HAP-1 (cell line): ENCODE measurements at regions of chr16 and their contacts with region 1.

Region 1: DNA sequence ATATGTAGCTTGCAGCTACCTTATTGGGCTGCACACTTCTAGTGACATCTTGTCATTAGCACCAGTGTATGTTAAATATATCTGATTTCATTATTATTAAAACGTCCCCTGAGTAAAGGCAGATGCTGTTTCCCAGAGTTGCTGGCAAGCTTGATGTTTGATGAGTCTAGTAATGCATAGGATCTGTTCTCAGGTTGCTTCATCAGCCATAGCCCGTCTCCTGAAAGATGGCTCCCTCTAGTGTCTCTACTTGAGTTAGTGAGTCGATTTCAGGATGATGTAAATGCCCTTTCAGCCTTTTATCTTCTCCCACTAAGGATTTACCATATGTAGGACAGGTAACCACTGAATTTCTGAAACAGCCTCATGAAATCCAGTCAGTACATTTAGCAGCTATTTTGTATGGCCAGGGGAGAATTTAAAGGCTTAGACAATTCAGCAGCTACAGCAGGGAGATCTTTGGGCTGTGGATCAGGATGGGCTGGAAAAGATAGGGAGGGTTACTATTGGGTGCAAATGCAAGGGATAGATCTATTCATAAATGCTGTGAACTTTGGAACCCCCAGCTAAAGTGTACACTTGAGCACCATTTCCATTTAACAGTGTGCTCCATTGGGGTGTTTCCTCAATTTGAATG is 376.3 kb downstream of the CNTNAP4 start:
- DNase-seq: peak; percentile 30 to 49
- H3K4me3 ChIP-seq: no peak overlapping the region
- H3K4me1 ChIP-seq: no peaks in the 10 kb centered on the region
- H3K27me3 ChIP-seq: 0 out of 2 replicates have a peak, but pooled peaks cover 6% of the 10 kb centered on the region

Region 2: DNA sequence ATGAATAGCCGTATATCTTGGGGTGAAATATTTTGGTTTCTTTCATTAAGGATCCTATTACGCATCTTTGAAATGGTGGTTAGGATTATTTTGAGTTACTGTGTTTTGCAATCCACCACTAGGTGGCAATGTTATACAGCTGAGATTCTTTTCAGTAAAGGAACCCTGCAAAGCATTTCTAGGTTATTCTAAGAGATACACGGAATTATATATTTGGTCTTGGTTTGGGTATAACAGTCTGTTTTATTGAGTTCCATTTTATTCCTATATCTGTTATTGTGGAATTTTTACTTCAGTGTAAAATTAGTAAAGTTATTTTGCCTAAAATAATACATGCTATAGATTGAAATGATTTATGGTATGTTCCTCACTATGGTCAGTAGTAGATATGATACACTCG is 864.3 kb before region 1 on chr16:
- in situ Hi-C with region 1: loop called (anchors 25 kb)
- DNase-seq: peak; percentile 34 to 65
- H3K4me3 ChIP-seq: no peak overlapping the region
- H3K4me1 ChIP-seq: no peaks in the 10 kb centered on the region
- H3K27me3 ChIP-seq: peaks cover under 1% of the 10 kb centered on the region; the same call in 1 of the 2 replicates

Region 3: GRCh38 chr16:77171745-77172635 is 518.5 kb after region 1 on chr16:
- in situ Hi-C with region 1: loop called (anchors 25 kb)
- DNase-seq: peak; percentile 58 to 61
- H3K4me3 ChIP-seq: no peak overlapping the region
- H3K4me1 ChIP-seq: no peaks in the 10 kb centered on the region
- H3K27me3 ChIP-seq: peaks cover 11% of the 10 kb centered on the region; the same call in 1 of the 2 replicates